Right ventricle myocardium inferior (tissue), 1 donor: ENCODE measurements at regions of chr5 and their contacts with region 1.

Region 1: GRCh38 chr5:162323471-162323870 is 255.9 kb downstream of the GABRG2 start:
- DNase-seq: no peak
- ATAC-seq: no peak

Region 2: GRCh38 chr5:162288647-162289296 is 34.7 kb before region 1 on chr5:
- intact Hi-C with region 1: no loop called
- DNase-seq: no peak
- ATAC-seq: no peak

Region 3: DNA sequence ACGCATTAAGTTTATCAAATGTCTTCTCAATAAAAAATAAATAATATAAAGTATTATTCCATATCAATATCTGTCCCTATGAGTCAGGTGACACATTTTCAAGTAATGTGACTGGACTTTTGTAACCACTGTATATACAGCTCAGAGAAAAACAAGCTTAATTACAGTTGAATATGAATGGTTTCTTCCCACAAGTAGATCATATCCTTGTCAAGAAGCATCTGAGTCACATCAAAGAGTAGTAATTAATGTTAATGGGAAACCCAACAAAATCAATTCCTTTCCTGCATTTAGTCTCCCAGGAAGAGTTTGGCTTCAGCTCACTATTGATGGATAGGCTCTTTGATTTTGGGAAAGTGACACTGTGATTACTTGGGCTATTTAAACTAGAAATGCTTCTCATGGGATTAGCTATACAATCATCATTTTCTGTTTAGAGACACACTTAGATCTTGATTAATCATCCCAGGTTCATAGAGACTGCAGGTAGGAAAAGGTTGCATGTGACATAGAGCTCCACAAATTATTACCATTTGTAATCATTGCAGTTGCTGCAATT is 37.0 kb after region 1 on chr5:
- intact Hi-C with region 1: no loop called
- DNase-seq: no peak
- ATAC-seq: no peak

Region 4: DNA sequence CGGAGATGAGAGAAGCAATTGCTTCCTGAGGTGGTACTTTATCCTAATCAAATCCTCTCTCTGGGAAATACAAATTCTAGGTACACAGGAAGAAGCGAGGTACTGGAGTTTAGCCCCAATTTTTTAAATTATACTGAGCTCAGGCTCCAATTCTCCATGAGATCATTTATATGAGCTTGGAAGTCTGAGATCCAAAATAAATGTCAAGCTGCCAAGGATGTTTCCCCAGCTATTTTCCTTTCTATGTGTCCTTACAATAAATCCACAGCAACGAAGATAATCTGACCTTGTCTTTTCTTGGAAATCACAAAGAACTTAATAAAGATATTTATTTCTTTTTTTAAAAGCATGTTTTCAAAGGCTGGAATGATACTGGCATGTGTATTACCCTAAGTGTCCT is 341.4 kb after region 1 on chr5:
- intact Hi-C with region 1: loop called (anchors 10 kb)
- DNase-seq: no peak
- ATAC-seq: no peak